Calu3 (cell line): ENCODE measurements at regions of chr11 and their contacts with region 1.

Region 1: GRCh38 chr11:12174477-12175143 is 64.2 kb downstream of the MICAL2 start:
- DNase-seq: no peak
- H3K4me3 Mint-ChIP-seq: no peak overlapping the region
- H3K27ac Mint-ChIP-seq: peak overlapping the region; percentile 64
- H3K4me1 Mint-ChIP-seq: peaks cover 57% of the 10 kb centered on the region
- H3K27me3 Mint-ChIP-seq: no peaks in the 10 kb centered on the region
- CTCF ChIP-seq: no peak

Region 2: GRCh38 chr11:11538277-11538960 is 636.2 kb before region 1 on chr11:
- CTCF ChIA-PET with region 1: no interaction called
- intact Hi-C with region 1: no loop called
- DNase-seq: no peak
- H3K4me3 Mint-ChIP-seq: no peak overlapping the region
- H3K27ac Mint-ChIP-seq: no peak overlapping the region
- H3K4me1 Mint-ChIP-seq: no peaks in the 10 kb centered on the region
- H3K27me3 Mint-ChIP-seq: no peaks in the 10 kb centered on the region
- CTCF ChIP-seq: no peak

Region 3: GRCh38 chr11:12050470-12051286 is 123.9 kb before region 1 on chr11:
- CTCF ChIA-PET with region 1: no interaction called
- intact Hi-C with region 1: no loop called
- DNase-seq: no peak
- H3K4me3 Mint-ChIP-seq: no peak overlapping the region
- H3K27ac Mint-ChIP-seq: no peak overlapping the region
- H3K4me1 Mint-ChIP-seq: peaks cover 37% of the 10 kb centered on the region
- H3K27me3 Mint-ChIP-seq: no peaks in the 10 kb centered on the region
- CTCF ChIP-seq: no peak

Region 4: GRCh38 chr11:12126344-12127019 is 48.1 kb before region 1 on chr11:
- CTCF ChIA-PET with region 1: no interaction called
- intact Hi-C with region 1: loop called (anchors 5 kb)
- DNase-seq: peak; percentile 61
- H3K4me3 Mint-ChIP-seq: peak overlapping the region; percentile 8
- H3K27ac Mint-ChIP-seq: peak overlapping the region; percentile 90
- H3K4me1 Mint-ChIP-seq: peaks cover 61% of the 10 kb centered on the region
- H3K27me3 Mint-ChIP-seq: no peaks in the 10 kb centered on the region
- CTCF ChIP-seq: no peak

Region 5: DNA sequence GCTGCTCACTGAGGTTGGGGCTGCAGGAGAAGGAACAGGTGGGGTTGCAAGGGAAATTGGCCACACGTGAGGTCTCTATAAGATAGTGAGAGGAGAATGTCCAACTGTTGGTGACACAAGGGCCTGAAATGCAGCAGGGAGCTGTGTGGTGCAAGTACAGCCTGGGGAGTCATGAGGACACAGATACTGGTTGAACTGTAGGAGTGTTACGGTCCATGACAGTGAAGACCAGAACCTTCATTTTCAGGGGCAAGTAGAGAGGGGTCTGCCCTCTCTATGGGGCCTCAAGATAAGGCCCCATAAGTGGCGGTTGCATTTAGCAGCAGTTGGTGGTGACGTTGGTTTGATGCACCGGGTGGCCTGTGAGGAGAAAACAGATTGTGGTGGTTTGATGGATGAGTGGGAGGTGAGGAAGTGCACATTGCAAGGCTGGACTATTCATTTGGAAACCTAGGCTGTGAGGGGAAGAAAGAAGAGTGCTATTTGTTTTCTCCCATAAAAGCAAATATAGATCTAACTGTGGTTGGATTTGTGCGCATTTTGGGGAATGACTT is 24.9 kb before region 1 on chr11:
- CTCF ChIA-PET with region 1: no interaction called
- intact Hi-C with region 1: no loop called
- DNase-seq: no peak
- H3K4me3 Mint-ChIP-seq: no peak overlapping the region
- H3K27ac Mint-ChIP-seq: peak overlapping the region; percentile 46
- H3K4me1 Mint-ChIP-seq: peaks cover 43% of the 10 kb centered on the region
- H3K27me3 Mint-ChIP-seq: no peaks in the 10 kb centered on the region
- CTCF ChIP-seq: no peak